Heart right ventricle (tissue), 16 donors: ENCODE measurements at regions of chr1 and their contacts with region 1.

Region 1: GRCh38 chr1:208207388-208208131 is 36.6 kb downstream of the PLXNA2 start:
- DNase-seq: peak; percentile 40 to 75
- ATAC-seq: peak; percentile 50 to 86 (median 80)
- H3K4me3 ChIP-seq: no peak overlapping the region
- H3K27ac ChIP-seq: peak overlapping the region; percentile 52 to 89 (median 76)
- H3K4me1 ChIP-seq: peaks cover 22 to 92% (median 74%) of the 10 kb centered on the region in 9 donors
- H3K27me3 ChIP-seq: no peaks in the 10 kb centered on the region
- CTCF ChIP-seq: no peak

Region 2: GRCh38 chr1:208141610-208142192 is 65.9 kb before region 1 on chr1:
- intact Hi-C with region 1: loop called in 1 of 10 experiments (anchors 5 kb)
- DNase-seq: no peak
- ATAC-seq: peak in 1 of 8 donors; percentile 10
- H3K4me3 ChIP-seq: no peak overlapping the region
- H3K27ac ChIP-seq: no peak overlapping the region
- H3K4me1 ChIP-seq: peaks cover 0 to 17% (median 7%) of the 10 kb centered on the region in 9 donors
- H3K27me3 ChIP-seq: no peaks in the 10 kb centered on the region
- CTCF ChIP-seq: no peak

Region 3: GRCh38 chr1:208219659-208220282 is 12.2 kb after region 1 on chr1:
- intact Hi-C with region 1: loop called in 1 of 10 experiments (anchors 2 kb)
- DNase-seq: peak; percentile 69 to 87
- ATAC-seq: peak; percentile 83 to 92 (median 88)
- H3K4me3 ChIP-seq: peak overlapping the region in 2 of 10 donors; percentile 6 to 9
- H3K27ac ChIP-seq: peak overlapping the region; percentile 70 to 88 (median 84)
- H3K4me1 ChIP-seq: peaks cover 43 to 99% (median 75%) of the 10 kb centered on the region in 9 donors
- H3K27me3 ChIP-seq: no peaks in the 10 kb centered on the region
- CTCF ChIP-seq: no peak

Region 4: DNA sequence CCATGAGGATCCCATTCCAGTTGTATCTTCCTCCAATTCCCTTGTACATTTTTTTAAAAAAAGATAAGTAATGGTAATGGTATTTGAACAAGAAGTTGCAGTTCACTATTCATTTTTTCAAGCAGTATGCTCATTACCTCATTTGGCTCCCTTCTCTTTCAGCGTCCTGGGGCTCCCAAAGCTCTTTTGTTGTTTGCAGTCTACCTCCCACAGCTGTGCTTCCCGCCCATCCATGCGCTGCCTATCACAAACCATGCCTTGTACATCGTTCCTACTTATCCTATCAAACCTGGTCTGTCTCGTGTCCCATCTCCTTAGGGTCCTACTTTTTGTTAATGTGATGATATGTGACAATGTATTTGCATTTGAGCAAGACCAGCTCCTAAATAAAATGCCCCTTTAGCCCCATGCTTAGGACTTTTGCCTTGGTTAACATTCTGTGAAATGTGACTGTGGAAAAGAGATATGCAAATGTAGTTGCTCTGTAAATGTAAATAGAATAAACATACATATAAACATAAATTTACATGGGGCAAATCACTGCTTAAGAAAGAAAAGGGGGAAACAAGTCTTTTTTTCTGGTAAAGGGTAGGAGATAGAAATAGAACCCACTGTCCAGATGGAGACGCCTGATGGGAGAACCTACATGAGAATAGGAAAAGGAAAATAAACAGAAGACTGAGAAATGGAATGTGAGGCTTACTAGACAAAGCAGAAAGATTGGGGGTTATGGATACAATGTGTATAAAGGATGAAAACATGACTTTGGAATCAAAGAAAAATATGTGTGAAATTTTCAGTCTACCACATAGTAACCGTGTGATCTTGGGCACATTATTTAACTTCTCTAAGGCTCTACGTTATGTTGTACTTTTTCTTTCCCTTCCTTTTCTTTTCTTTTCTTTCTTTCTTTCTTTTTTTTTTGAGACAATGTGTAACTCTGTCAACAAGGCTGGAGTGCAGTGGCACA is 96.5 kb after region 1 on chr1:
- intact Hi-C with region 1: no loop called
- DNase-seq: no peak
- ATAC-seq: no peak
- H3K4me3 ChIP-seq: no peak overlapping the region
- H3K27ac ChIP-seq: no peak overlapping the region
- H3K4me1 ChIP-seq: no peaks in the 10 kb centered on the region
- H3K27me3 ChIP-seq: peaks cover 0 to 6% (median 0%) of the 10 kb centered on the region in 7 donors
- CTCF ChIP-seq: no peak